B cell (primary cell): ENCODE measurements at regions of chr6 and their contacts with region 1.

Region 1: GRCh38 chr6:52020945-52021570 is 66.4 kb downstream of the PKHD1 start:
- DNase-seq: peak; percentile 45
- ATAC-seq: no peak
- H3K4me3 ChIP-seq: no peak overlapping the region
- H3K4me3 Mint-ChIP-seq: no peak overlapping the region
- H3K27ac ChIP-seq: no peak overlapping the region
- H3K27ac Mint-ChIP-seq: no peak overlapping the region
- H3K4me1 ChIP-seq: peaks cover 0 to 2% of the 10 kb centered on the region in 2 donors
- H3K4me1 Mint-ChIP-seq: peaks cover 1% of the 10 kb centered on the region
- H3K27me3 ChIP-seq: no peaks in the 10 kb centered on the region
- H3K27me3 Mint-ChIP-seq: peaks cover 3% of the 10 kb centered on the region
- CTCF ChIP-seq: peak; percentile 95

Region 2: GRCh38 chr6:50816115-50816675 is 1204.9 kb before region 1 on chr6:
- CTCF ChIA-PET with region 1: interaction called, 23 read pairs
- POLR2A ChIA-PET with region 1: no interaction called
- intact Hi-C with region 1: no loop called
- DNase-seq: peak; percentile 67
- ATAC-seq: peak; percentile 28
- H3K4me3 ChIP-seq: peak overlapping the region; percentile 40 to 87 (median 53)
- H3K4me3 Mint-ChIP-seq: peak overlapping the region; percentile 88
- H3K27ac ChIP-seq: no peak overlapping the region
- H3K27ac Mint-ChIP-seq: no peak overlapping the region
- H3K4me1 ChIP-seq: peaks cover 8 to 19% of the 10 kb centered on the region in 2 donors
- H3K4me1 Mint-ChIP-seq: peaks cover 18% of the 10 kb centered on the region
- H3K27me3 ChIP-seq: peaks cover 1 to 41% (median 29%) of the 10 kb centered on the region in 4 experiments
- H3K27me3 Mint-ChIP-seq: peaks cover 57% of the 10 kb centered on the region
- CTCF ChIP-seq: peak; percentile 86

Region 3: DNA sequence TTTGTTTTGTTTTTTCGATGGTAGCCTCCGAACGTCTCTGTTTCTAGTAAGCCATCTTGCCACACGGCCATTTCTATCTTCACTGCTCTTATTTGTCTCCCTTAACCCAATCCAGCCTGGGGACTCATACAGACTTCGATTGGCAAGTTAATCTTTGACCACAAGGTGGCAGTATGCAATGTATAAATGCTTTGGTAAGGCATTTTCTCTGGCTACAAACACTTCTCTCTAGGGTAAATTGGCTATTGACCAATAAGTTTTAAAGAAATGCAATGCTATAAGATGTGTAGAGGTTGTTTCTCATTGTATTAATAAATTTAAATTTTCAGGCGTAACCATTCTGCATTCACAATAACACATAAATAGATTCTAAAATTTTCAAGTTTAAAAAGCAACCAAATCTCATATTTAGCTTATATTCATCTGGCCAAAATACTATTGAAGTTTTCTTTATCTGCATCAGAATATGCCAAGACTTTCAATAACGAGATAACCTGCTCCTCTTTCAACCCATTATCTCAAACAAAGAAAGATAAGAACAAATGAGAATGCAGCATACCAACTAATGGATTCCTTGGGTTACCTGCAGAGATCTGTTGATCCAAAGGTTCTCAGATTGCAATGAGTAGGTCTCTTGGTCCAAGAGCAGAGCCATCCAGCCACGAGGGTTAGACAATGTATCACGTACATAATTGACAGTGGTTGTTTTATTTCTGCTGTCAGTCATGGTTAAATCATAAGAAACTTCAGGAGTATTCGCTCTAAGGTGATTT is 165.6 kb before region 1 on chr6:
- CTCF ChIA-PET with region 1: interaction called, 38 read pairs
- POLR2A ChIA-PET with region 1: no interaction called
- intact Hi-C with region 1: no loop called
- DNase-seq: peak; percentile 55
- ATAC-seq: no peak
- H3K4me3 ChIP-seq: no peak overlapping the region
- H3K4me3 Mint-ChIP-seq: no peak overlapping the region
- H3K27ac ChIP-seq: no peak overlapping the region
- H3K27ac Mint-ChIP-seq: no peak overlapping the region
- H3K4me1 ChIP-seq: no peaks in the 10 kb centered on the region
- H3K4me1 Mint-ChIP-seq: no peaks in the 10 kb centered on the region
- H3K27me3 ChIP-seq: no peaks in the 10 kb centered on the region
- H3K27me3 Mint-ChIP-seq: peaks cover 10% of the 10 kb centered on the region
- CTCF ChIP-seq: peak; percentile 76

Region 4: DNA sequence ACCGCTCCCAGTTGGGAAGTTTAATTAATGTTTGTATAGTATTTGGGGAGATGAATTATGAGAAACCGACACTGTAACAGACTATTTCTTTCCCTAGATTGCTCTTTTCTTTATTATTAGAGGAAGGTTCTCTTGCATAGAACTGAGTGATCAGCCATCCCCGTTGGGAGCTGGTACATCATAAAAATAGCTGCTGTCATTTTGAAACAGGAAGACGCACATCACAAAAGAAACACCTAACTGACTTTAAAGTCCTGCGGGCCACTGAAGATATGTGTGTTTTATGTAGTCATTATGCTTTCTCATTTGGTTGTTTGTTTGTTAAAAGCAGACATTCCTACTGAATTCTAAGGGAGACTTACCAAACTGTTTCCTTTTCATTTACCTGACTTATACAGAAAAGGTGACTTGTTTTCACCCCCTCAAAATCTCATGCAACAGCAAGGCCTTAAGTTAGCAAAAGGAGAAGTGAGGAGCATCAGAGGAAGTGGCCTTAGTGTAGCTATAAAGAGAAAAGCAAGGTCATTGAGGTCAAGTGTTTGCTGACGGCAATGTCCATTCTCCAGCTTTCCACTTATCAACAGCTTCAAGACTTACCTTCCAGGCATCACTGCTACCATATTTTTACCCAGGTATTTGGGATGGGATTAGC is 24.6 kb before region 1 on chr6:
- CTCF ChIA-PET with region 1: interaction called, 21 read pairs
- POLR2A ChIA-PET with region 1: no interaction called
- intact Hi-C with region 1: no loop called
- DNase-seq: peak; percentile 29
- ATAC-seq: no peak
- H3K4me3 ChIP-seq: no peak overlapping the region
- H3K4me3 Mint-ChIP-seq: peak overlapping the region; percentile 64
- H3K27ac ChIP-seq: peak overlapping the region; percentile 32 to 69
- H3K27ac Mint-ChIP-seq: peak overlapping the region; percentile 63
- H3K4me1 ChIP-seq: peaks cover 11 to 16% of the 10 kb centered on the region in 2 donors
- H3K4me1 Mint-ChIP-seq: peaks cover 21% of the 10 kb centered on the region
- H3K27me3 ChIP-seq: no peaks in the 10 kb centered on the region
- H3K27me3 Mint-ChIP-seq: no peaks in the 10 kb centered on the region
- CTCF ChIP-seq: no peak

Region 5: GRCh38 chr6:52049252-52050050 is 28.4 kb after region 1 on chr6:
- CTCF ChIA-PET with region 1: interaction called, 11 read pairs
- POLR2A ChIA-PET with region 1: no interaction called
- intact Hi-C with region 1: no loop called
- DNase-seq: peak; percentile 45
- ATAC-seq: no peak
- H3K4me3 ChIP-seq: no peak overlapping the region
- H3K4me3 Mint-ChIP-seq: no peak overlapping the region
- H3K27ac ChIP-seq: no peak overlapping the region
- H3K27ac Mint-ChIP-seq: no peak overlapping the region
- H3K4me1 ChIP-seq: no peaks in the 10 kb centered on the region
- H3K4me1 Mint-ChIP-seq: no peaks in the 10 kb centered on the region
- H3K27me3 ChIP-seq: no peaks in the 10 kb centered on the region
- H3K27me3 Mint-ChIP-seq: peaks cover 24% of the 10 kb centered on the region
- CTCF ChIP-seq: peak; percentile 78